ENCODE measurements at regions of chr13 and their contacts with region 1.

Region 1: DNA sequence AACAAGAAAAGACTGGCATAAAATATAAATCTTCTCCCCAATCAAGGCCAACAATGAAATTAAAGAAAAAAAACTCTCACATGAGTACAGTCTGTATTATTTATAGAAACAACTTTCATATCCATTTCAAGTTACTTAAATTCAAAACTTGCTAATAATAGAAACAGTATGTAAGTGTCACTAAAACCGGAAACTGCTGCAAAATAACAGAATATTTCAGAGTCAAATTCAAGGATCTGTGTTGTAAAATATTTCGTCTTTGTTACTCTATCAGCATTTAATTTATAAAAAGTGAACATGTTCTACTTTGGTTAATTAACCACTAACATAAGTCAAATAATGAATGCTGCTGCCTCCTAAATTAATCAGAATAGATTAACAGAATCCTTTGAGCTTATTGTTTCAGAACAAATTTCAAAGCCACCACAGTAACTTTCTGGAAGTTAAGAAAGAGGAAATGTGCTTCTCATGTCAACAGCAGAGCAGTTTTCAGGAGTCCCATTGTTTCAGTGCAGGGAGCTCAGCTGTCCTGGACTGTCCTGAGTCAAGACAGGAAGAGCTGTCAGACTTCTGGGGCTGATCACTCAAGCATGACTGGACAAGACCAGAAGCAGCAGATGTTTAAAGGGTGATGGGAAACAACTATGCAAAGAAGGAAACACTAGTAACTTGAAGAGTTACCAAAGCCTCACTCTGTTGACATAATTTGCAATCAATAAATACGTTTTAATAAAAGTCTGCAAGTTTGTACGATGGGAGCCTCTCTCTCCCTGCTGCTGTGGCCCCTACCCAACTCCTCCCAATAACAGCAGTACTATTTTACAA is 76.9 kb downstream of the FOXO1 start:
- DNase-seq: no peak
- H3K4me3 ChIP-seq: no peak overlapping the region
- H3K4me3 Mint-ChIP-seq: no peak overlapping the region
- H3K27ac Mint-ChIP-seq: no peak overlapping the region
- H3K4me1 ChIP-seq: peaks cover 48% of the 10 kb centered on the region
- H3K4me1 Mint-ChIP-seq: peaks cover 34% of the 10 kb centered on the region
- H3K27me3 ChIP-seq: no peaks in the 10 kb centered on the region
- H3K27me3 Mint-ChIP-seq: no peaks in the 10 kb centered on the region
- CTCF ChIP-seq: no peak

Region 2: GRCh38 chr13:40344270-40345148 is 245.0 kb before region 1 on chr13:
- CTCF ChIA-PET with region 1: no interaction called
- POLR2A ChIA-PET with region 1: no interaction called
- intact Hi-C with region 1: loop called (anchors 5 kb)
- DNase-seq: no peak
- H3K4me3 ChIP-seq: no peak overlapping the region
- H3K4me3 Mint-ChIP-seq: no peak overlapping the region
- H3K27ac Mint-ChIP-seq: peak overlapping the region; percentile 26
- H3K4me1 ChIP-seq: peaks cover 46% of the 10 kb centered on the region
- H3K4me1 Mint-ChIP-seq: peaks cover 56% of the 10 kb centered on the region
- H3K27me3 ChIP-seq: no peaks in the 10 kb centered on the region
- H3K27me3 Mint-ChIP-seq: no peaks in the 10 kb centered on the region
- CTCF ChIP-seq: no peak

Region 3: DNA sequence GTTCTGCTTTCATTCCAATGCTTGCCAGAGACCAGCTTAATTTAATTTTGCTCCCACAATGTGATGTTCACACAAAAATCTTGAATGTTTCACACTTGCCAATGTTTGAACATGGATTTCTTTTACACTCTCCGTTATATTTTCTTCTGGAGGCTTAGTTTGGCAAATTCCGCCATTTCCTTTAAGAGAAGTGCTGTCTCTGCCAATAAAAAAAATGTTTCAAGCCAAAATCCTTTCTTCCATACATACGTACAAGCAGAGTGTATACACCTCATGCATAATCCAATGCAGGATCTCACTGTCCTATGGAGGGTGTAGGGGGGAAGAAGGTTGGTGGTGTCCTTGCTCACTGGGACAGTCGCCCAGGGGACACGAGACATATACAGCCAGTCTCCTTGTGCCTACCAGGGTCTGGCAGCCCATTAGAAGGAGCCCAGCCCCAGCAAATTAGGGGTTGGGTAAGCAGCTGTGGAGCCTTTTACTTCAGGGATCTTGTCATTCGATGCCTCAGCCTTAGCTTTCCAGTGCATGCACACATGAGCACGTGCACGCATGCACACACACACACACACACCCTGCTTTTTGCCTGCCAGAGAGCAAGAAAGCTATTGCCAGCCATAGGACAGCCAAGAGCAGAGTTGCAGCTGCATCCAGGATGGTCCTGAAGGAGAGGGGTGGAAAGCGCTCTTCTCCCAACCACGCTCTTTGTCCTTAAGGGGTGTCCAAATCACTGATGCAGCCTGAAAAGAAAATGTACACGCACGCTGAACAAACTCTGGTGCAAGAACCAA is 131.4 kb before region 1 on chr13:
- CTCF ChIA-PET with region 1: no interaction called
- POLR2A ChIA-PET with region 1: no interaction called
- intact Hi-C with region 1: no loop called
- DNase-seq: no peak
- H3K4me3 ChIP-seq: no peak overlapping the region
- H3K4me3 Mint-ChIP-seq: no peak overlapping the region
- H3K27ac Mint-ChIP-seq: no peak overlapping the region
- H3K4me1 ChIP-seq: 0 out of 2 replicates have a peak, but pooled peaks cover 4% of the 10 kb centered on the region
- H3K4me1 Mint-ChIP-seq: no peaks in the 10 kb centered on the region
- H3K27me3 ChIP-seq: no peaks in the 10 kb centered on the region
- H3K27me3 Mint-ChIP-seq: no peaks in the 10 kb centered on the region
- CTCF ChIP-seq: no peak

Region 4: DNA sequence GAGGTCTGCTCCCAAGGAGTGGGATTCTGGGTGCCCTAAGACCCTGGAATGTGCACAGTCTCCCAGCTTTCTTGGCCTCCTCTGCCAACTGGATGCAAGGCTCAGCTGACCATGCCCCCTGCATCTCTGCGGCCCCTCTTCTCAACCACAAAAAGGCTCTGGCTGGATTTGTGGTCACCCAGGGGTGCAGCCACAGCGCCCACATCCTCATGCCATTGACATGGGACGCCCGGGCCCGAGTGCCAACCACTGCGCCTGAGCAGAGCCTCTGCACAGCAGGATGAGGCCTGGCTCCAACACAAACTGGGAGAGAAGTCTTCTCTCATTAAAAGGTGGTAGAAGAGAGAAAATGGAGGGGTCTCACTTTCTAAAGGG is 26.5 kb before region 1 on chr13:
- CTCF ChIA-PET with region 1: no interaction called
- POLR2A ChIA-PET with region 1: no interaction called
- intact Hi-C with region 1: loop called (anchors 2 kb)
- DNase-seq: no peak
- H3K4me3 ChIP-seq: no peak overlapping the region
- H3K4me3 Mint-ChIP-seq: no peak overlapping the region
- H3K27ac Mint-ChIP-seq: no peak overlapping the region
- H3K4me1 ChIP-seq: peaks cover 37% of the 10 kb centered on the region
- H3K4me1 Mint-ChIP-seq: peaks cover 27% of the 10 kb centered on the region
- H3K27me3 ChIP-seq: no peaks in the 10 kb centered on the region
- H3K27me3 Mint-ChIP-seq: no peaks in the 10 kb centered on the region
- CTCF ChIP-seq: no peak

Region 5: DNA sequence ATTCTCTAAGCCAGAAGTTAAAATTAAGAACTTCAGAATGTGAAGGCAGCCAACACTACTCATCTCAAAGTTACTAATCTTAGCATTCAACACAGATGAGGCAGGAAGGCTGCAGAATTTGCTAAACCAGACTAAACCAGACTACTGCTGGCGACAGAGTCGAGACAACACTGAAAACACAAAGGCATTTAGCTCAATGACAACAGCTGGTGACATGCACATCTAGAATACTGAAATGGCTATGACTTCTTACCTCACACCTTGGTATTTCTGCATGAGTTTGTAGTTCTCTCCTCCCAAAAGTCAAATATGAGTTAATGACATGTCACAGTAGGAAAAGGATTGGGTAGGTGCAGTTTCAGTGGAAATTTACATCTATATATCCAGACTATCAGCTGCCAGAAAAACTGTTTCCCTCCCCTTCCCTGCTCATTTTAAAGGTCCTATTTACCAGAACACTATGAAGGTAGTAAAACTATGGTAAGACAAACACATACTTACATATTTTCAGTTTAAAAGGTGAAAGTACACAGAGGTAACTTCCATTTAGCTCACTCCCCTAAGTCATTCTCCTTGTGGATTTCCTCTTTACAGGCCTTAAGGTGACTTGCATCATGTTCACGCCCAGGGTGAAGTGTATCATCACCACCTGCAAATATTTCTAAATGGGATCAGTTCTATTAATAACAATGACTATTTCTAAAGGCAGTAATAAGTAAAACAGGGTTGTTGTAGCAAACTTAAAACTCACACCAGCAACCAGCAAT is 55.5 kb after region 1 on chr13:
- CTCF ChIA-PET with region 1: no interaction called
- POLR2A ChIA-PET with region 1: no interaction called
- intact Hi-C with region 1: loop called (anchors 1 kb)
- DNase-seq: peak in 1 of 2 experiments; percentile 61
- H3K4me3 ChIP-seq: no peak overlapping the region
- H3K4me3 Mint-ChIP-seq: peak overlapping the region; percentile 43
- H3K27ac Mint-ChIP-seq: peak overlapping the region; percentile 89
- H3K4me1 ChIP-seq: peaks cover 30% of the 10 kb centered on the region
- H3K4me1 Mint-ChIP-seq: peaks cover 25% of the 10 kb centered on the region
- H3K27me3 ChIP-seq: no peaks in the 10 kb centered on the region
- H3K27me3 Mint-ChIP-seq: no peaks in the 10 kb centered on the region
- CTCF ChIP-seq: no peak

Region 6: GRCh38 chr13:40813661-40814454 is 224.4 kb after region 1 on chr13:
- CTCF ChIA-PET with region 1: no interaction called
- POLR2A ChIA-PET with region 1: no interaction called
- intact Hi-C with region 1: no loop called
- DNase-seq: peak in 1 of 2 experiments; percentile 19
- H3K4me3 ChIP-seq: no peak overlapping the region
- H3K4me3 Mint-ChIP-seq: no peak overlapping the region
- H3K27ac Mint-ChIP-seq: no peak overlapping the region
- H3K4me1 ChIP-seq: no peaks in the 10 kb centered on the region; the same call in 1 of the 2 replicates
- H3K4me1 Mint-ChIP-seq: no peaks in the 10 kb centered on the region
- H3K27me3 ChIP-seq: no peaks in the 10 kb centered on the region
- H3K27me3 Mint-ChIP-seq: no peaks in the 10 kb centered on the region
- CTCF ChIP-seq: peak; percentile 58 to 67